Activated T-helper 1 cell treated with anti-CD3 and anti-CD28 coated beads, Interleukin-12 subunit alpha, Interleukin-12 subunit beta, Interleukin-2, Interleukin-4 antibody, amounts not matched to agents 30 ng/mL and 10 ng/mL and 1 ng/mL, durations not matched to agents 14 hours and 24 hours and 36 hours (primary cell): ENCODE measurements at regions of chr1 and their contacts with region 1.

Region 1: GRCh38 chr1:205472737-205473441 is 17.0 kb upstream of the BLACAT1 start:
- DNase-seq: no peak
- H3K4me3 Mint-ChIP-seq: no peak overlapping the region
- H3K27ac Mint-ChIP-seq: no peak overlapping the region
- H3K4me1 Mint-ChIP-seq: no peaks in the 10 kb centered on the region
- H3K27me3 Mint-ChIP-seq: peaks cover 33% of the 10 kb centered on the region

Region 2: DNA sequence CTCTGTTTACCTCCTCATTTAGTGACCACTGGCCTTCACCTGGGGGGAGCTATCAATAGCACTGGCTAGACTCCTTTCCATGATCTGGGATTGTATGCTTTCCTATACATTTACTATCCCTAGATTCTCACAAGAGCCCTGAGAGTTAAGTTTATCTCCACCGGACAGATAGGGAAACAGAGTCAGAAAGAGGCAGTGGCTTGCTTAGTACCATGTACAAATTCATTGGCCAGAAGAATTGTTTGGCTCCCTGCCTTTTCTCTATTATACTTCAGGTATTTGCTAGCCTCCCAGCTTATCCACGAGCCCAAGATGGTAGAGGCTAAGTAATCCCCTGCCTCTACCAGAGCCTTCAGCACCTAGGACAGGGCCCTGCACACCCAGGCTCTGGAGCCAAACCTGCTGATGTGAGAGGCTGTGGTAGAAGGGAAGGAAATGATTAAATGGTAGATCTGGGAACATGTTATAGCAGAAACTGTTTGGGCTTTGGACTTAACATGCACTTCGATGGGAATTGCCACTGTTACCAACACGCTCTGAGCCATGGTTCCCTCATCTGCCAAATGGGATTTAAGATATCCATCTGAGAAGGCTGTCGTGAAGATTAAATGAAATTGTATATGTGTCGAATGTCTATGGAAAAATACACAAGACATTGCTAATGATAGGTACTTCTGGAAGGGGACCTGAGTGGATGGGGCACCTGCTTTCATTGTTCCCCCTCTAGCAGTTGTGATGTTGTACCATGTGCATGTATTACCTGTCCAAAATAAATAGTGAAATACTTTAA is 13.9 kb before region 1 on chr1:
- intact Hi-C with region 1: loop called (anchors 2 kb)
- DNase-seq: peak; percentile 29
- H3K4me3 Mint-ChIP-seq: no peak overlapping the region
- H3K27ac Mint-ChIP-seq: no peak overlapping the region
- H3K4me1 Mint-ChIP-seq: peaks cover 5% of the 10 kb centered on the region
- H3K27me3 Mint-ChIP-seq: peaks cover 59% of the 10 kb centered on the region